Esophagus squamous epithelium (tissue), 5 donors: ENCODE measurements at regions of chr10 and their contacts with region 1.

Region 1: DNA sequence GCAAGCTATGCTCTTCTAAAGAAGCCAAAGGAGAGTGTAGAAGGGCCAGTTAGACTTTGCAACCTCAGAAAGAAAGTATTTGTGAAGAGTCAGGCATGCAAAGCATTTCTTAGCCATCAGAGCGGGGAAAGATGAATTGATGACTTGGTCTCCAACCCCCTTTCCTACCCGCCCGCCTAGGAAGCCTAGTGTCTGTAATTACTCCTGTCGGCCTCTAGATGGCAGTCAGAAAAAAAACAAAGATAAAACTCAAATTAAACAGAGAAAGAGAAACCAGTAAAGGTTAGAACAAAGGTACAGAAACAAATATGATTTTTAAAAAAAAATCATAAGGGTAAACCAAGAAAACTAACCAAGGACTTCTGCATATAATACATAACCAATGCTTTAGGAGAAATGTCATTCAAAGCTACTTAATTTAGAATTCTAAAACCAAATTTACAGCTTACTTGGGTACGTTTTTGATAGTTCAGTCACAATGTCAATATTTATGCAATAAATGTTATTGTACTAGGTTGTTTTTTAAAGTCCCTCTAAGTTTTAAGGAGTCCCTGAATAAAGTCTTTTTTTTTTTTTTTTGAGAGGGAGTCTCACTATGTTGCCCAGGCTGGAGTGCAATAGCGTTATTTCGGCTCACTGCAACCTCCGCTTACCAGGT is 97.6 kb downstream of the LYZL1 start:
- DNase-seq: no peak
- H3K4me3 ChIP-seq: no peak overlapping the region
- H3K27ac ChIP-seq: no peak overlapping the region
- H3K4me1 ChIP-seq: no peaks in the 10 kb centered on the region
- H3K27me3 ChIP-seq: no peaks in the 10 kb centered on the region
- CTCF ChIP-seq: peak; percentile 53 to 79 (median 72)
- POLR2A ChIP-seq: no peak

Region 2: DNA sequence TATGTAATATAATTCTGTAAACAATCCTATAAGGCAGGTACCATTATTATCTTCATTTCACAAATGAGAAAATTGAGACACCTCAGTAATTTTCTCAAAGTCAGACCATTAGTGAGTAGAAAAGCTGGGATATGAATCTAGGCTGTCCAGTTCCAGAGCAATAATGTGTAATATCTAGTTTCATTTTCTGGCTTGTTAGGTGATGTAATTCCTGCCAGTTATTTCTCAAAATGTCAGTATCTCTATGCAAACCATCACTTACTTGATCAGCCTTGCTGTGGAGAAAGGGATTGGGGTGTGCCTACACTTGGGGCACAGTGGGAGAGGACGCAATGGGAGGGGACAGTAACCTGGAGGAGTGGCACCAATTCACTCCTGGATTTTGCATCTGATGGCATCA is 59.9 kb after region 1 on chr10:
- intact Hi-C with region 1: loop called (anchors 5 kb)
- DNase-seq: no peak
- H3K4me3 ChIP-seq: no peak overlapping the region
- H3K27ac ChIP-seq: no peak overlapping the region
- H3K4me1 ChIP-seq: peaks cover 0 to 26% (median 8%) of the 10 kb centered on the region in 3 donors
- H3K27me3 ChIP-seq: no peaks in the 10 kb centered on the region
- CTCF ChIP-seq: no peak
- POLR2A ChIP-seq: no peak